MCF 10A (cell line): ENCODE measurements at regions of chr16 and their contacts with region 1.

Region 1: GRCh38 chr16:89641458-89642119 is 15.9 kb downstream of the CHMP1A start:
- DNase-seq: no peak
- H3K4me3 Mint-ChIP-seq: no peak overlapping the region
- H3K27ac Mint-ChIP-seq: no peak overlapping the region
- H3K4me1 Mint-ChIP-seq: peaks cover 8% of the 10 kb centered on the region
- H3K27me3 Mint-ChIP-seq: no peaks in the 10 kb centered on the region
- CTCF ChIP-seq: no peak

Region 2: GRCh38 chr16:89574681-89575246 is 66.8 kb before region 1 on chr16:
- CTCF ChIA-PET with region 1: interaction called, 6 read pairs
- POLR2A ChIA-PET with region 1: no interaction called
- intact Hi-C with region 1: loop called (anchors 1 kb)
- DNase-seq: peak; percentile 73
- H3K4me3 Mint-ChIP-seq: peak overlapping the region; percentile 49
- H3K27ac Mint-ChIP-seq: no peak overlapping the region
- H3K4me1 Mint-ChIP-seq: no peaks in the 10 kb centered on the region
- H3K27me3 Mint-ChIP-seq: no peaks in the 10 kb centered on the region
- CTCF ChIP-seq: peak; percentile 93

Region 3: DNA sequence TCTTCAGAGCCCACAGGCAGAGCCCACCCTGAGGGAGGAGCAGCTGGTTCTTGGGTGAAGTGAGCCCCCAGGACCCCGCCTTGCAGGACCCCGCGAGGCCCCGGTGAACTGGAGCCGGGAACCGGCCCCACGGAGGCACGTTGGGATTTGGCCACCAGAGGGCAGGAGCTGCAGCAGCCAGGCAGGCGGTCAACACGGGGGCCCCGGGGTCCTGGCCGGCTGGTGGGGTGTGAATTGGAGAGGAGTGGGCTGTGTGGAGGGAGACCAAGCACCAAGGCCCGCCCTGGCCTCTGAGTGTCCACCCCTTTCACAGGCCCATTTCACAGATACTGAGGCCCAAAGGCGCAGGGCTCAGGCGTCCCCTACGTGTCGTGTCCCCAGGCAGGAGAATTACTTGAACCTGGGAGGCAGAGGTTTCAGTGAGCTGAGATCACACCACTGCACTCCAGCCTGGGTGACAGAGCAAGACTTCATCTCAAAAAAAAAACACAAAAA is 25.9 kb before region 1 on chr16:
- CTCF ChIA-PET with region 1: interaction called, 27 read pairs
- POLR2A ChIA-PET with region 1: no interaction called
- intact Hi-C with region 1: loop called (anchors 1 kb)
- DNase-seq: no peak
- H3K4me3 Mint-ChIP-seq: no peak overlapping the region
- H3K27ac Mint-ChIP-seq: no peak overlapping the region
- H3K4me1 Mint-ChIP-seq: peaks cover 7% of the 10 kb centered on the region
- H3K27me3 Mint-ChIP-seq: no peaks in the 10 kb centered on the region
- CTCF ChIP-seq: peak; percentile 51